ENCODE measurements at regions of chr1 and their contacts with region 1.

Region 1: GRCh38 chr1:78839704-78840277 is 166.7 kb downstream of the ADGRL4 start:
- DNase-seq: no peak
- H3K4me3 Mint-ChIP-seq: no peak overlapping the region
- H3K27ac Mint-ChIP-seq: no peak overlapping the region
- H3K4me1 Mint-ChIP-seq: peaks cover 10% of the 10 kb centered on the region
- H3K27me3 Mint-ChIP-seq: no peaks in the 10 kb centered on the region

Region 2: DNA sequence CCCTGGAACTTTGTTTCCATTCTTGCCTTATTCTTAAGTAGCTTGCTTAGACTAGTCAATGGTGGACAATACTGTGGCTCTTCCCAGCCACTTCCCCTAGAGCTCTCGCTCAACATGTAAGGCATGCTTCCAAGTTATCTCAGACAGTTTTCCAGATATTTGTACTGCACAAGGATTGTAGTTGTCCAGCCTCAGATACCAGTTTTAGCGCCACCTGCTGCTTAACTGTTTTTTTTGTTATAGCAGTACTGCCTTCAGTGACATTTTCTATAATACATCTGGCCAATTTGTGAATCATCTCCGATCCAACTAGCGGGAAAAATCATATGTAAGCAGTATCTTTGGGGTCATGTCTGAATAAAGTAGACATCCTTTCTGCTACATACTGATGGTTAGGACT is 513.4 kb after region 1 on chr1:
- CTCF ChIA-PET with region 1: interaction called, 18 read pairs
- POLR2A ChIA-PET with region 1: no interaction called
- DNase-seq: no peak
- H3K4me3 Mint-ChIP-seq: no peak overlapping the region
- H3K27ac Mint-ChIP-seq: no peak overlapping the region
- H3K4me1 Mint-ChIP-seq: no peaks in the 10 kb centered on the region
- H3K27me3 Mint-ChIP-seq: no peaks in the 10 kb centered on the region

Measured in activated CD4-positive, alpha-beta memory T cell treated with anti-CD3 and anti-CD28 coated beads, Interleukin-2, amount 10 ng/mL, durations not matched to agents 7 days and 5 days (primary cell).